Prostate gland (tissue), 2 donors: ENCODE measurements at regions of chr20 and their contacts with region 1.

Region 1: DNA sequence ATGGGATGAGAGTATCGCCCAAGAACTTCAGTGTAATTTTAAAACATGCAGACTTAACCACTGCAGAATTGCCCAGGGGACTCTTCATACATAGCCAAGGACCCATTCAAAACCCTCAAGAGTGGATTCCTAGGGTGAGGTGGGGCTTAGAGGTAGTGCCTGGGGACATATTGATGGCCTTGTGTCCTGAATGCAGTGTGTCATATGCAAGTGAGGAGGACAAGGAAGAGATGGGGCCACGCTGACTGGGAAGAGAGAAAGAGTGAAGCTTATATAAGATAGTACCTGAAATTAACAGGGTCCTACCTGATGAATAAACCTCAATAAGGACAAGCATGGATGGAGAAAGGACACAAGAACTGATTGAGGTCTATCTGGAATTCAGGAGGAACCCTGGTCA is 13.9 kb downstream of the MYL9 start:
- DNase-seq: no peak
- H3K4me3 ChIP-seq: no peak overlapping the region
- H3K27ac ChIP-seq: no peak overlapping the region
- H3K4me1 ChIP-seq: no peaks in the 10 kb centered on the region
- H3K27me3 ChIP-seq: no peaks in the 10 kb centered on the region
- CTCF ChIP-seq: no peak
- POLR2A ChIP-seq: no peak

Region 2: GRCh38 chr20:36591854-36592641 is 36.8 kb after region 1 on chr20:
- intact Hi-C with region 1: loop called (anchors 5 kb)
- DNase-seq: peak; percentile 27
- H3K4me3 ChIP-seq: no peak overlapping the region
- H3K27ac ChIP-seq: no peak overlapping the region
- H3K4me1 ChIP-seq: no peaks in the 10 kb centered on the region
- H3K27me3 ChIP-seq: no peaks in the 10 kb centered on the region
- CTCF ChIP-seq: peak in 3 of 4 experiments; percentile 32 to 44 (median 32)
- POLR2A ChIP-seq: no peak